MCF 10A (cell line): ENCODE measurements at regions of chr19 and their contacts with region 1.

Region 1: DNA sequence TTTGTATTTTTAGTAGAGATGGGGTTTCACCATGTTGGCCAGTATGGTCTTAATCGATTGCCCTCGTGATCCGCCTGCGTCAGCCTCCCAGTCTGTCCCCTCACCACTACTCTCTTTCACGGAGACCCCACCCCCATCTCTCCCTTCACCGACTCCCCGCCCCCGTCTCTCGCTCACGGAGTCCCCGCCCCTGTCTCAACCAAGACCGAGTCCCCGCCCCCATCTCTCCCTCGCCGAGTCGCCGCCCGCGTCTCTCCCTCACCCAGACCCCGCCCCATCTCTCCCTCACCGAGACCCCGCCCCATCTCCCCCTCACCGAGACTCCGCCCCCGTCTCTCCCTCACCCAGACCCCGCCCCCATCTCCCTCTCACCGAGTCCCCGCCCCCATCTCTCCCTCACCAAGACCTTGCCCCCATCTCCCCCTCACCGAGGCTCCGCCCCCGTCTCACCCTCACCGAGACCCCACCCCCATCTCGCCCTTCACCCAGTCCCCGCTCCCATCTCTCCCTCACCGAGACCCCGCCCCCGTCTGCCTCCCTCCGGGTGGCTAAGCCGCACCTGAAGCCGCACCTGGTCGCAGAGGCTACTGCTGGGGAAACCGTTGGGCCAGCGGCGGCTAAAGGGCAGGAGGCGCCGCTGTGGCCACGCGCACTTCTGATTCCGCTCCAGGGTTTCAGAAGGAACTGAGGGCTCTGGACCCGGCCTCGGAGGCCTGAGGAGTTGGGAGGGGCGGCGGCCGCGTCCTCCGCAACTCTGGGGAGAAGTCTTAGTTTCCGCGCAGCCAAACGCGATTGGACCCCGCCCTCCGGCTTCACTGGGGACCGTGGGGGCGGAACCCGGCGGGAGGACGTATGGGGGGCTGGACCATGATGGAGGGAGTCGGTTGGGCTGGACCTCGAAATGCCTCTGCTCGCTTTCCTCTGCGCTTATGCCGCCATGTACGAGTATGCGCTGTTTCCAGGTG is 17.1 kb upstream of the ZNF846 start:
- DNase-seq: peak; percentile 85
- H3K4me3 Mint-ChIP-seq: peak overlapping the region; percentile 93
- H3K27ac Mint-ChIP-seq: peak overlapping the region; percentile 71
- H3K4me1 Mint-ChIP-seq: peaks cover 16% of the 10 kb centered on the region
- H3K27me3 Mint-ChIP-seq: no peaks in the 10 kb centered on the region
- CTCF ChIP-seq: no peak

Region 2: DNA sequence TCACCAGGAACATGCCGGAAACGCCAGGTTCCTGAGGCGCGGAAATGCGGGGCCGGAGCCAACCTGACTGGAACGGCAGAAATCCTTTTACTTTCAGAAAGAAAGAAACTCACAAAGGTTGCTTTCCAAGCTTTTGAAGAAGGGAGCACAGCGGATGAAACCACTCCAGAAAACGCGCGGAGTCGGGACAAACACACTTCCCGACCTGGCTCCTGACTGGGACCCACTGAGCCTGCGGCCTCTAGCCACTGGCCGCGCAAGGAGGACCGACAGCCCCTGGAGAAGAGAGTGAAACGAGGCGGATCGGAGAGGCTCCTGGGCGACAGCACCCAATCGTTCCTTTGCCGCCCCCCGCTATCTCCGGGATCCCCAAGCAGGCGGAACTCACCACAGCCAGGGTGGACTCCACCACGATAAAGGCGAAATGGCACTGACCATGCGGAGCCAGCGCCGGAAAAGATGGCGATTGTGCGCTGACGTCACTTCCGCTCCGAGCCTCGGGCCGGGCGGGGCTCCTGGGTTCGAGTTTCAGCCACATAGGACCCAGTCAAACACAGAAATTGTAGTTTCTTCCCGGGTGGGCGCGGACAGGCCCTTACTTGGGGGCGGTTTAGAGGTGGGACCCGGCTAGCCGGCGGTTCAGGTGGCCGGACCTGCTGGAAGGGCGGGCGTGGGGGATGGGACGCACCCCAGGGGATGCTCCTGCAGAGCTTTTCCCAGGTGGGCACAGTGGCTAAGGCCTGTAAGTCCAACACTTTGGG is 201.4 kb before region 1 on chr19 and contains the start of gene ZNF121:
- CTCF ChIA-PET with region 1: interaction called, 21 read pairs
- POLR2A ChIA-PET with region 1: interaction called, 6 read pairs
- intact Hi-C with region 1: loop called (anchors 1 kb)
- DNase-seq: peak; percentile 83
- H3K4me3 Mint-ChIP-seq: peak within 1 kb of the TSS; percentile 93
- H3K27ac Mint-ChIP-seq: peak within 1 kb of the TSS; percentile 98
- H3K4me1 Mint-ChIP-seq: peaks cover 5% of the 10 kb centered on the region
- H3K27me3 Mint-ChIP-seq: no peaks in the 10 kb centered on the region
- CTCF ChIP-seq: no peak
- total RNA-seq, gene ZNF121: 51.9 and 63.9 TPM in 2 replicates

Region 3: GRCh38 chr19:9914315-9915207 is 128.9 kb after region 1 on chr19:
- CTCF ChIA-PET with region 1: no interaction called
- POLR2A ChIA-PET with region 1: no interaction called
- intact Hi-C with region 1: loop called (anchors 1 kb)
- DNase-seq: peak; percentile 84
- H3K4me3 Mint-ChIP-seq: peak overlapping the region; percentile 45
- H3K27ac Mint-ChIP-seq: no peak overlapping the region
- H3K4me1 Mint-ChIP-seq: peaks cover 14% of the 10 kb centered on the region
- H3K27me3 Mint-ChIP-seq: peaks cover 11% of the 10 kb centered on the region
- CTCF ChIP-seq: peak; percentile 51

Region 4: DNA sequence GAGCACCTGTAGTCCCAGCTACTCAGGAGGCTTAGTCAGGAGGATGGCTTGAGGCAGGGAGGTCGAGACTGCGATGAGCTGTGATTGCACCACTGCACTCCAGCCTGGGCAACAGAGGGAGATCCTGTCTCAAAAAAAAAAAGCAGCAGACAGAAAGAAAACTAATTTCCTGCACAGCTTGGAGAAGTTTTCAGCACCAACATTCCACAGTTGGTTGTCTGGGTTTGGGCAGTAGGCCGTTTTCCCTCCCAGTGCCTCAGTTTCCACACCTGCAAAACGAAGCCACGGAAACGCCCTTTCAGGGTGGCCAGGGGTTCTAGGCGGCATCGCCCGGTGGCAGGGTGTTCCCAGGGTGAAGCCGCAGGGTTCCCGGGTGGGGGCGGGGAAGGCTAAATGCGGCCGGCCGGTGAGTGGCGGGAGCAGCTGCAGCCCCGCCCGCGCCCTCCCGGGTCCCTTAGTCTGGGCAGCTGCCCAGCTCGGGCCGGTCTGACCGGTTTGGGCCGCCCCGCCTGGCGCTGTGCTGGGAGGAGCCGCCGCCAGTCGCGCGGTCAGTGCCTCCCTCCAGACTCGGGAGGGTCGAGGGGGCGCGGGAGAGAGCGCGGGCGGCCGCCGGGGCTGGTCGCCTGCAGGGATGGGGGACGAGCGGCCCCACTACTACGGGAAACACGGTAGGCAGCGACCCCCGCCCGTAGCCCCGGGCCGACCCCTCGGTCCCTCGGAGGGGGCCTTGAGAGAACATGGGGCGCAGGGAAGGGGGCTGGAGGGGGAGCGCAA is 839.5 kb after region 1 on chr19 and contains the start of gene SLC44A2:
- CTCF ChIA-PET with region 1: no interaction called
- POLR2A ChIA-PET with region 1: no interaction called
- intact Hi-C with region 1: no loop called
- DNase-seq: peak; percentile 56
- H3K4me3 Mint-ChIP-seq: peak within 1 kb of the TSS; percentile 69
- H3K27ac Mint-ChIP-seq: peak within 1 kb of the TSS; percentile 31
- H3K4me1 Mint-ChIP-seq: peaks cover 4% of the 10 kb centered on the region
- H3K27me3 Mint-ChIP-seq: no peaks in the 10 kb centered on the region
- CTCF ChIP-seq: no peak
- total RNA-seq, gene SLC44A2: 6.2 and 10.6 TPM in 2 replicates